Transverse colon (tissue), 4 donors: ENCODE measurements at regions of chr2 and their contacts with region 1.

Region 1: GRCh38 chr2:39050109-39050508 is 70.7 kb downstream of the SOS1 start:
- DNase-seq: no peak
- H3K4me3 ChIP-seq: no peak overlapping the region
- H3K27ac ChIP-seq: no peak overlapping the region
- H3K4me1 ChIP-seq: no peaks in the 10 kb centered on the region
- H3K27me3 ChIP-seq: no peaks in the 10 kb centered on the region
- CTCF ChIP-seq: no peak
- EP300 ChIP-seq: no peak
- POLR2A ChIP-seq: no peak

Region 2: DNA sequence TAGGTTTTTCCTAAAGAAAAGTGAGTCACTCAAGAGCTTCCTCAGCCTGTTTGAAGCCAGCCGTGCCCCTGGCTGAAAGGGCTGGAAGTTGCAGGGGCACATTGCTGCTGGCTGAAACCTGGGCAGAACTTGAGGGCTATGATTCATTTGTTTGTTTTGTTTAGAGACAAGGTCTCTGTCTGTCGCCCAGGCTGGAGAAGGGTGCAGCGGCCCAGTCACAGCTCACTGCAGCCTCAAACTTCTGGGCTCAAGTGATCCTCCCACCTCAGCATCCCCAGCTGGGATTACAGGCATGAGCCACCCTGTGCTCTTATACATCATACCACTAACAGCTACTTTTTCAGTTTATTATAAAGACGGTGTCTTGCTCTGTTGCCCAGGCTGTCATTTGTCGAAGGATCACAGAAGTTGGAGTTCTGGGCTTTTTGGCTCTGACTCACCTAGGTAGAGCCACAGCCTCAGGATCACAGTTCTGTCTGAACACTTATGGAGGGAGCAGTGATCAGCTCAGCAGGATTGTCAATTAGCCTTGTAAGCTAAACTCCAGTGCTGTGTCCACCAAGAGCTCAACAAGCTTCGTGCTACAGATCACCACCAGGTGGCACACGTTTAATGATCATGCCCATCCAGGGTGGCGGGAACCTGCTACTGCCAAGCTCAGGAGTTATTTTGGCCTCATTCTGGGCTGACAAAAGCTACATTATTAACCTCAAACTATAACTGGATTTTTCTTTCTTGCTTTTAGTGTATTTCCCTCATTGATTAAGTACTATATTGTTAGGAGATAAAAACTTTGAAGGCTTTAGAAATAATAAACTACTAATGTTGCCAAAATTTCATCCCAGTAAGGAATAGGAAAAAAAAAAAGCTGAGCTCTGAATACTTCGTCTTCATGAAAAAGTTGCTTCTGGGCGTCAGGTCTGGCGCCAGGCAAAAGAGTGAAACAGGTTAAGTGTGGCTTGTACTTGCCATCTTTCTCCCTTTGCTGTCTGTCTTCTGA is 102.6 kb before region 1 on chr2:
- in situ Hi-C with region 1: no loop called
- intact Hi-C with region 1: no loop called
- DNase-seq: peak; percentile 70
- H3K4me3 ChIP-seq: no peak overlapping the region
- H3K27ac ChIP-seq: no peak overlapping the region
- H3K4me1 ChIP-seq: no peaks in the 10 kb centered on the region
- H3K27me3 ChIP-seq: no peaks in the 10 kb centered on the region
- CTCF ChIP-seq: peak; percentile 57 to 65 (median 62)
- EP300 ChIP-seq: no peak
- POLR2A ChIP-seq: no peak

Region 3: DNA sequence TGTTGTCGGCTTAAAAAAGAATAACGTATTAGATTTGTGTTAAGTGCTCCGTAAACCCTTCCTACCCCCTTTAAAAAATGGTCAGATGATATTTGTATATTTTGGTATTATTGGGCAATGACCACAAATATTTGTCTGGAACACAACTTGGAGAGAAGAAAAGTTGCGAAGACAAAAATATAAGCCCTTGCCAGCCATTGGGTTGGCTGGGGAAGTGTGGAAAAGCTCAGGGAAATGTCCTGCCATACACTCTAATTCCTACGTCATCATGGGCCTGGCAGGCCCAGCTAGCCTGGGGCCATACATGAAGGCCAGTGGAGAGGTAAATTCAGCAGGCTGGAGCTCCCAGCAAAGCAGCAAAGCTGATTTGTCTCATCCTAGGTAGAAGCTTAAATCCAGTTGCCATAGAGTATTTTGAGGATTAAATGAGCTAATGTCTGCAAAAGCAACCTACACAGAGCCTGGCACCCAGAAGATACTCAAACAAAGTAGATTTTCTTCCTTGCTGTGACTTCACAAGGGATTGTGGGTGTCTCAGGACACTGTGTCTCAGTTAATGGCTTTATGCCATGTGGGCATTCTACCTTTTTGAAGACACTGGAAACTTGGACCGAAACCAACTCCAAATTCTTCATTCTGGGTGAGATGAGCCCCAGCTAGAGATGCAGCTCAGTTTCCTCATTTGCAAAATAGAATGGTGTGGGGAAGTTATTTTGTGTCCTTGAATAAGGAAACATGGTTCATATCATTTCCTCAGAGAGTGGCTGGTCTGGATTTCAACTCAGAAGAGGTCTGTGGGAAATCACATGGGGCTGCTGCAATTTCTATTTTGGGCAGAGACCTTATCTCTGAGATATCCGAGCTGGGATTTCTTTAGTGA is 474.9 kb after region 1 on chr2:
- in situ Hi-C with region 1: no loop called
- intact Hi-C with region 1: loop called (anchors 5 kb)
- DNase-seq: no peak
- H3K4me3 ChIP-seq: no peak overlapping the region
- H3K27ac ChIP-seq: no peak overlapping the region
- H3K4me1 ChIP-seq: peaks cover 0 to 4% (median 0%) of the 10 kb centered on the region in 4 donors
- H3K27me3 ChIP-seq: no peaks in the 10 kb centered on the region
- CTCF ChIP-seq: no peak
- EP300 ChIP-seq: no peak
- POLR2A ChIP-seq: no peak